ENCODE measurements at regions of chr13 and their contacts with region 1.

Region 1: DNA sequence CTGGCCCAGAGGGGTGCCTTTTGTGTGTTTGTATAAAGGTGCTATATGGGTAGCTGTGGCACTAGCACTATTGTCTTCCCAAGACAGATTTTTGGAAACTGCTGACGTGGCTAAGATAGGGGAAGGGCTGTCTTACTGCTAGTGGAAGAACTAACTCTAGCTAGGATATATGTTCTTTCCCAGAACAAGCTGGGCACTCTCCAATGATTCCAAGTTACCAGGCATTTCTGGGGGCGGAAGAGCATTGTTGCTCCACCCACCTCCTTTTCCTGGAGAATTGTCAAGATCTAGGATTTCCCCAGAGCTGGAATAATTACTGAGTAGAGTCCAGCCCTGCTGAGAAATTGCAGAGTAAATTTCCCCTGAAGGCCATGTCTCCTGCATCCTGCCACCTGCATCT is 408.3 kb downstream of the KLF5 start:
- DNase-seq: no peak
- H3K4me3 Mint-ChIP-seq: no peak overlapping the region
- H3K27ac Mint-ChIP-seq: no peak overlapping the region
- H3K4me1 Mint-ChIP-seq: no peaks in the 10 kb centered on the region
- H3K27me3 Mint-ChIP-seq: no peaks in the 10 kb centered on the region

Region 2: DNA sequence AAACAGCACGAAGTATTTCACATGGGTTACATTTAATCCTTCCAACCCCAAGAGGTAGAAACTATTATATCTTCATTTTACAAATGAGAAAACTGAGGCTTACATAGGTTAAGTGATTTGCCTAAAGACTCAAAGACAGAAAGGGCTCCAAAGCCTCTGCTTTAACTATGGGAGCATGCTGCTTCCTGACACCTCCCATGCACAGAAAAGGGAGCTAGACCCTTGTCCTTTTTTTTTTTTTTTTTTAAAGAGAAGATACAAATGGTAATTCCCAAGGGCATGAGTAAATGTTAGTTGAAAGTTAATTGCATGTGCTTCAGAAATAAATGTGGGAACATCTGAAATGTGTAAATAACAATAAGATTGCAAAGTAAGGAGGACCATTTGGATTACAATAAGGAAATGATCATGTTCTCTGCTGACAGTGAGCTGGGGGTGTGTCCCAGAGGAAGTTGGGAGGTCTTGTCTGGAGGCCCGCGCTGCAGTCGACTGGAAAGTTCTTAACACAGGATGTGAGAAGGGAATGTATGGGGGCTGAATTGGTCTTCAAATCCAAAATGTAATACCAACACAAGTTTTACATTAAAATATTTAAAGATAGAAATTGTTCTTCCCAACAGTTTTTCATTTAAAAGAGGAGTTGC is 166.8 kb after region 1 on chr13:
- CTCF ChIA-PET with region 1: no interaction called
- intact Hi-C with region 1: loop called (anchors 1 kb)
- DNase-seq: no peak
- H3K4me3 Mint-ChIP-seq: no peak overlapping the region
- H3K27ac Mint-ChIP-seq: no peak overlapping the region
- H3K4me1 Mint-ChIP-seq: peaks cover 25% of the 10 kb centered on the region
- H3K27me3 Mint-ChIP-seq: no peaks in the 10 kb centered on the region

Region 3: DNA sequence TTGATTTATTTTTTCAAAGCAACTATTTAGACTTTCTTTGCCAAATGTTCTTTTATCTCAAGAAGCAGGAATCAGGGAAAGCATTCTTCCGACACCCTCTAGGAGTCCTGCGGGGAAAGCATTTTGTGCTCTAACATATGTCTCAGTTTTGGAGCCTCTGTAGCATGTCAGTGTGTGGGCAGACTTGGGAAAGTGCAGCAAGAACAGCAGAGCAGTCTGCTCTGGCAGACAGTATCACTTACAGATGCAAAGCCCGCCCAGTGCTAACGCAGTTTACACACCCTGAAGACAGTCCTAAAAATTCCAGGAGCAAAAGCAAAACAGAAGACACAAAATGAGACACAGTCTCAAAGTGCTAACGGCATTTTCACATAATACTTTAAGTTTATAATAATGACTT is 273.5 kb after region 1 on chr13:
- CTCF ChIA-PET with region 1: no interaction called
- intact Hi-C with region 1: no loop called
- DNase-seq: no peak
- H3K4me3 Mint-ChIP-seq: peak overlapping the region; percentile 58
- H3K27ac Mint-ChIP-seq: no peak overlapping the region
- H3K4me1 Mint-ChIP-seq: peaks cover 41% of the 10 kb centered on the region
- H3K27me3 Mint-ChIP-seq: no peaks in the 10 kb centered on the region

Measured in activated naive CD4-positive, alpha-beta T cell treated with anti-CD3 and anti-CD28 coated beads for 36 hours (primary cell).